Right lobe of liver (tissue), 6 donors: ENCODE measurements at regions of chr4 and their contacts with region 1.

Region 1: DNA sequence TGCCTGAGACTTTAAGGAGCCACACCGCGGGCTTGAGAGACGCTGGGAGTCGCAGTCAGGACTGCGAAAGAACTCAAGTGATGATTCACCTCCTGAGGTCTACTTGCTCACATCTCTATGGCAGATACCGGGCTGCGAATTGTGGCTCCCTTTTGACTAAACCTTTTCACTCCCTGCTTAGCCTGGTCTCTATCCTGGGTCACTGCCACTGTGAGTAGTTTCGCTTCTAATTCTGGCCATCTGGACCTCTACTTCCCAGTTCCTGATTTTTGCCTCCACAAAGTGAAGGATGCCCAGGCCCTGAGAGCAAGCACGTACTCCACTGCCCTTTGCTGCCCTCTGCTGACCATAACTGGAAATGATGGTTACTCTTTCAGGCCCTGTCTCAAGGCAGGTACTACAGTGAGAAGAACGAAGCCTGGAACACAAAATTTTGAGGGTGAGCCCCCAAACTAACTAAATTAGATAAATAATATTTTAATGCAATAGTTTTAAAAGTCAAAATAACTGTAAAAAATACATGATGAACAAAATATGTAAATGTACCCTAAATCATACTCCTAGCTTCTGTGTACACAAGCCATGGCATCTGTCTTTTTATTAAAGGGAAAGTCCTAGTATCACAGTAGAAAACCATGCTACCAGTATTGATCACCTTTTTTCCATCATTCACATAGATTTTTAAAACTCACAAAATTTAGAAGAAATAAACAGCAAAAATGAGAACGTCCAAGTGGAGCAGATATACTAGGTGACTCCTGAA is 16.7 kb downstream of the MAD2L1 start:
- DNase-seq: peak in 2 of 3 donors; percentile 58 to 72
- ATAC-seq: peak; percentile 99 to 100 (median 100)
- H3K4me3 ChIP-seq: no peak overlapping the region
- H3K27ac ChIP-seq: no peak overlapping the region
- H3K4me1 ChIP-seq: no peaks in the 10 kb centered on the region
- H3K27me3 ChIP-seq: no peaks in the 10 kb centered on the region
- CTCF ChIP-seq: peak; percentile 67 to 89 (median 83)
- POLR2A ChIP-seq: no peak

Region 2: GRCh38 chr4:119559044-119559647 is 490.8 kb before region 1 on chr4:
- intact Hi-C with region 1: loop called in 1 of 2 experiments (anchors 5 kb)
- DNase-seq: no peak
- ATAC-seq: peak; percentile 46 to 68 (median 62)
- H3K4me3 ChIP-seq: no peak overlapping the region
- H3K27ac ChIP-seq: no peak overlapping the region
- H3K4me1 ChIP-seq: no peaks in the 10 kb centered on the region
- H3K27me3 ChIP-seq: no peaks in the 10 kb centered on the region
- CTCF ChIP-seq: peak; percentile 48 to 59 (median 52)
- POLR2A ChIP-seq: no peak

Region 3: DNA sequence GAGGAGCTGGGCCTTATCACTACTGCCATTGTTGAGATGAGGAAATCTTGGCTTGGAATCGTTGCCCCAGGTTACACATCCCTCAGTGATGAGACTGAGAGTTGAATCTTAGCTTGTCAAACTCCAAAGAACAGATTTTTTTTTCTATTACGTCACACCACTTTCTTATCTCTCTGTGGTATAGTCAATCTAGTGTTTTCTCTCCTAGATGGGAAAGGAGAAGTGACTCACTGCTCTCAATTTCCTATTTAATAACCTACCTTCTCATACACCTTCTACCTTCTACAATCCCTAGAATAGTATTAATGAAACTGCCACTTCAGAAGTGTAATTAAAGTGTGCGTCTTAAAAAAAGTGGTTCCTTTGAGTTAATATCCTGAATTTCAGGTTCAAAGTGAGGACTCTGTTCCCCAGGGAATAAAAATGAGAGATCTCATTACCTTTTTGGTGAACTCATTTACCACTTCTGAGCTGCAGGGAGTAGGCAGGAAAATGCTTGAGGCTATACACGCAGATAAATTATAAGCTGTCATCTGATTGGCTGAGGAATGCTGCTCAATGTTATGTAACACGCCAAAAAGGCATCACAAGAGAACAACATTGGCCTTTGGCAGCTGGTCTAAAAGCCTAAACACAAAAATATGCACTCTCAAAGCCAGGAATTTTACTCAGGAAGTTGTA is 42.6 kb before region 1 on chr4:
- intact Hi-C with region 1: no loop called
- DNase-seq: no peak
- ATAC-seq: no peak
- H3K4me3 ChIP-seq: no peak overlapping the region
- H3K27ac ChIP-seq: no peak overlapping the region
- H3K4me1 ChIP-seq: no peaks in the 10 kb centered on the region
- H3K27me3 ChIP-seq: no peaks in the 10 kb centered on the region
- CTCF ChIP-seq: no peak
- POLR2A ChIP-seq: no peak